A549 (cell line): ENCODE measurements at regions of chr6 and their contacts with region 1.

Region 1: DNA sequence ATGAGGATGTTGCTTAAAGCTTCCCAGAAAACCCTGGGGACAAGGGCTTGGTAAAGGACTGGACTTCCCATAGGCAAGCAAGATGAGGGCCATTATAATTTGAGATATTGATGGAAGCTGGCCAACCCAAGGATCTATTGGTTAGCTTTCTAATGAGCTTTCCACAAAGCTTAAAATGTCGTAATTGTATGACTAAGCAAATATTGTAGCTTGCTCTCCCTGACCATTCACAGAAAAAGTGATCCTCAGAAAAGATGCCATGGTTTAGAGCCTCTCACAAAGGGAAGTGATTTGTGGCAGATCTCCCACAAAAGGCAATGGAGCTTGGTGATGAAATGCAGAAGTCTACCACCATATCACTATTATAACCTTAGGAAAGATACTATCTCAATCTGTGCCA is 13.6 kb downstream of the IL17F start:
- DNase-seq: no peak
- ATAC-seq: no peak
- H3K4me3 ChIP-seq: no peak overlapping the region
- H3K27ac ChIP-seq: no peak overlapping the region
- H3K4me1 ChIP-seq: no peaks in the 10 kb centered on the region
- CTCF ChIP-seq: no peak
- EP300 ChIP-seq: no peak
- POLR2A ChIP-seq: no peak
- RAD21 ChIP-seq: no peak

Region 2: DNA sequence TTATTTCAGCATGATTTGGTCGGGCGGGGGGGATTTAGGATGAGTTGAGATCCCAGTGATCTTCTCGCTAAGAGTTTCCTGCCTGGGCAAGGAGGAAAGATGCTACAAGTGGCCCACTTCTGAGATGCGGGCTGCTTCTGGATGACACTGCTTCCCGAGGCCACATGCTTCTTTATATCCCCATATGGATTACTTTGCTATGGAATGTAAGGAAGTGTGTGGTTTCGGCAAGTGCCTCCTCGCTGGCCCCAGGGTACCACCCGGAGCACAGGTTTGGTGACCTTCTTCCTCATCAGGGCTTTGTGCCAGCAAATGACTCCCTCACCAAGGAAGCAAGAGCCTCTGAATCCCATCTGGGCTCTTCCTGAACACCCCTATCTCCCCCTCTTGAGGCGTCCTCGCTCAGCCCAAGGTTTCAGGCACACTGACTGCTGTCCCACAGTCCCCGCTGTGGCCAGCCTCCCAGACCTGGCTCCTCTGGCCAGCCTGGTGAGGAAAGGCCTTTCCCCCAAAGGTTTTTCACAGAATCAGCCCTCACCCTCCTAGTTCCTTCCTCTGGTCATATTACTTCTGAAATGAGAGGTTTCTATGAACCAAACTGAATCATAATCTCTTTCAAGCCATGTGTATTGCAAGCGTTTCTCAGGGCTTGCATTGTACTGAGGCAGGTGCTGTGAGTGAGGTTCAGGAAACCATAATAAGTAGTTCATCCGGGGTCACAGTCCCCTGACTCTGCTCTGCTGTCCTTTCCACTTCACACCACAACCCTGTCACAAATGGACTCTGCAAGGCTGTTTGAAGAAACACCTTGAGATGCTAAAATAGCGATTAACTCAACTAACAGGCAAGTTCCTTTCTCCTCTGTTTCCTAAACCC is 86.2 kb before region 1 on chr6:
- CTCF ChIA-PET with region 1: no interaction called
- POLR2A ChIA-PET with region 1: no interaction called
- DNase-seq: no peak
- ATAC-seq: no peak
- H3K4me3 ChIP-seq: no peak overlapping the region
- H3K27ac ChIP-seq: no peak overlapping the region
- H3K4me1 ChIP-seq: no peaks in the 10 kb centered on the region
- CTCF ChIP-seq: no peak
- EP300 ChIP-seq: no peak
- POLR2A ChIP-seq: no peak
- RAD21 ChIP-seq: no peak

Region 3: DNA sequence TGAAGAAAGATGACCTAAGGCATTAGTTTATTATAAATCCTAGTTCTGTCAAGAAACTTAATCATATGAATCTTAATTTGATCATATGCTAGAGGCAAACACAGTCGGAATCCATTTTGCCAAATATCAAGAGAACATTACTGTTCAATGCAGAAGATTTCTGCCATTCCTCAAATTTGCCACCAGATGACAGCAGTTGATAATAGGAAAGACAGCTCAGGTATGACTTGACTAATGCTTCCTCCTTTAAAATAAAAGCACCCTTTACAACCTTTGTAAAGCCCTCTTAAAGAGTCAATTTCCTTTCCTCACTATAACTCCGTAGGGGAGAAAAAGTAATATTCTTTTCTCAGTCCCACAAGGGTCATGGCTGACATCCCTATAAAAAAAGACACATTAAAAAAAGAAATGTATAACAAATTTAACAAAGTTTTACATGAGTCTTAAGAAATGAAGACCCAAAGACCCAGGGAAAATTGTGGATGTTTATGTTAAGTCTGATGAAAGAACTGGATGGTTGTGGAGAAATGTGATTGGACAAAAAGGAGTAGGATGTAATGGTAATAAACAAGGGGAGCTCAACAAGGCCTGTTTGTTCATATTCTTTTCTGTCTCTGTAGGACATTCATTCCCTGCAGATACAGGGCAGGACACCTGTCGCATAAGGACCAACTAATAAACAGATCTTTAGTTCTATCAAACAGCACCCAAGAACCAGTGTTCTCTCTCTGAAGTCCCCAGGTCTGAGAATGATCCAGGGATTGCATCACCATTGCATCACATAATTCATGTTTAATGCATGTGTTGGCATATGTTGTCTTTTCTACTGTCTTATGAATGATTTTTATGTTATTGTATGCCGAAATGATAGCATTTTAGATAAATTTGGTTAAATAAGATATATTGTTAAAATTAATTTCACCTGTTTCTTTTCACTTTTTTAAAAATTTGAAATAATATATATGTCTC is 67.5 kb before region 1 on chr6:
- CTCF ChIA-PET with region 1: interaction called, 10 read pairs
- POLR2A ChIA-PET with region 1: no interaction called
- DNase-seq: peak; percentile 2 to 38
- ATAC-seq: peak; percentile 56 to 63; a peak in 3 of 6 replicates
- H3K4me3 ChIP-seq: no peak overlapping the region
- H3K27ac ChIP-seq: no peak overlapping the region
- H3K4me1 ChIP-seq: no peaks in the 10 kb centered on the region
- CTCF ChIP-seq: peak; percentile 54
- EP300 ChIP-seq: no peak
- POLR2A ChIP-seq: no peak
- RAD21 ChIP-seq: peak; percentile 66 to 71; a peak in 4 of 5 replicates